Caco-2 (cell line): ENCODE measurements at regions of chr11 and their contacts with region 1.

Region 1: GRCh38 chr11:65027213-65028067 is at the start of gene SNX15:
- DNase-seq: peak; percentile 95 to 96
- H3K4me3 ChIP-seq: peak within 1 kb of the TSS; percentile 66
- H3K4me3 Mint-ChIP-seq: peak within 1 kb of the TSS; percentile 63
- H3K27ac Mint-ChIP-seq: peak within 1 kb of the TSS; percentile 49
- H3K4me1 ChIP-seq: no peaks in the 10 kb centered on the region; the same call in 1 of the 2 replicates
- H3K4me1 Mint-ChIP-seq: peaks cover 7% of the 10 kb centered on the region
- H3K27me3 ChIP-seq: no peaks in the 10 kb centered on the region
- H3K27me3 Mint-ChIP-seq: no peaks in the 10 kb centered on the region
- CTCF ChIP-seq: peak; percentile 83 to 88
- total RNA-seq, gene SNX15: 35.5 and 35.8 TPM in 2 replicates

Region 2: GRCh38 chr11:64996710-64997380 is 30.6 kb before region 1 on chr11 and contains the start of gene BATF2:
- CTCF ChIA-PET with region 1: interaction called, 8 read pairs
- POLR2A ChIA-PET with region 1: interaction called, 10 read pairs
- intact Hi-C with region 1: no loop called
- DNase-seq: peak; percentile 79 to 84
- H3K4me3 ChIP-seq: no peak within 1 kb of the TSS
- H3K4me3 Mint-ChIP-seq: peak within 1 kb of the TSS; percentile 56
- H3K27ac Mint-ChIP-seq: peak within 1 kb of the TSS; percentile 63
- H3K4me1 ChIP-seq: peaks cover 37% of the 10 kb centered on the region
- H3K4me1 Mint-ChIP-seq: peaks cover 26% of the 10 kb centered on the region
- H3K27me3 ChIP-seq: no peaks in the 10 kb centered on the region
- H3K27me3 Mint-ChIP-seq: no peaks in the 10 kb centered on the region
- CTCF ChIP-seq: peak; percentile 45 to 69
- total RNA-seq, gene BATF2: 0.79 and 1.4 TPM in 2 replicates

Region 3: GRCh38 chr11:65040847-65041621 is 13.6 kb after region 1 on chr11 and contains the start of gene SAC3D1:
- CTCF ChIA-PET with region 1: interaction called, 4 read pairs
- POLR2A ChIA-PET with region 1: no interaction called
- intact Hi-C with region 1: loop called (anchors 1 kb)
- DNase-seq: peak; percentile 97 to 98
- H3K4me3 ChIP-seq: peak within 1 kb of the TSS; percentile 89
- H3K4me3 Mint-ChIP-seq: peak within 1 kb of the TSS; percentile 89
- H3K27ac Mint-ChIP-seq: peak within 1 kb of the TSS; percentile 83
- H3K4me1 ChIP-seq: peaks cover 11% of the 10 kb centered on the region; the same call in 1 of the 2 replicates
- H3K4me1 Mint-ChIP-seq: no peaks in the 10 kb centered on the region
- H3K27me3 ChIP-seq: no peaks in the 10 kb centered on the region
- H3K27me3 Mint-ChIP-seq: no peaks in the 10 kb centered on the region
- CTCF ChIP-seq: no peak
- total RNA-seq, gene SAC3D1: 21.2 and 21.6 TPM in 2 replicates

Region 4: GRCh38 chr11:65083834-65084597 is 56.6 kb after region 1 on chr11 and contains the starts of genes CDCA5 and ZFPL1:
- CTCF ChIA-PET with region 1: no interaction called
- POLR2A ChIA-PET with region 1: no interaction called
- intact Hi-C with region 1: loop called (anchors 5 kb)
- DNase-seq: peak; percentile 96 to 97
- H3K4me3 ChIP-seq: peak within 1 kb of the TSS; percentile 58
- H3K4me3 Mint-ChIP-seq: peak within 1 kb of the TSS; percentile 85
- H3K27ac Mint-ChIP-seq: peak within 1 kb of the TSS; percentile 98
- H3K4me1 ChIP-seq: peaks cover 16% of the 10 kb centered on the region; the same call in 1 of the 2 replicates
- H3K4me1 Mint-ChIP-seq: peaks cover 17% of the 10 kb centered on the region
- H3K27me3 ChIP-seq: no peaks in the 10 kb centered on the region
- H3K27me3 Mint-ChIP-seq: no peaks in the 10 kb centered on the region
- CTCF ChIP-seq: no peak
- total RNA-seq, gene CDCA5: 67.0 and 71.1 TPM in 2 replicates
- total RNA-seq, gene ZFPL1: 44.5 and 46.0 TPM in 2 replicates